Head of caudate nucleus (tissue), 42 donors: ENCODE measurements at regions of chr2 and their contacts with region 1.

Region 1: GRCh38 chr2:21317131-21317530 is 193.4 kb downstream of the TDRD15 start:
- DNase-seq: peak; percentile 13 to 92 (median 74)

Region 2: GRCh38 chr2:21181957-21182356 is 135.2 kb before region 1 on chr2:
- intact Hi-C with region 1: loop called (anchors 2 kb)
- DNase-seq: no peak